ENCODE measurements at regions of chr16 and their contacts with region 1.

Region 1: DNA sequence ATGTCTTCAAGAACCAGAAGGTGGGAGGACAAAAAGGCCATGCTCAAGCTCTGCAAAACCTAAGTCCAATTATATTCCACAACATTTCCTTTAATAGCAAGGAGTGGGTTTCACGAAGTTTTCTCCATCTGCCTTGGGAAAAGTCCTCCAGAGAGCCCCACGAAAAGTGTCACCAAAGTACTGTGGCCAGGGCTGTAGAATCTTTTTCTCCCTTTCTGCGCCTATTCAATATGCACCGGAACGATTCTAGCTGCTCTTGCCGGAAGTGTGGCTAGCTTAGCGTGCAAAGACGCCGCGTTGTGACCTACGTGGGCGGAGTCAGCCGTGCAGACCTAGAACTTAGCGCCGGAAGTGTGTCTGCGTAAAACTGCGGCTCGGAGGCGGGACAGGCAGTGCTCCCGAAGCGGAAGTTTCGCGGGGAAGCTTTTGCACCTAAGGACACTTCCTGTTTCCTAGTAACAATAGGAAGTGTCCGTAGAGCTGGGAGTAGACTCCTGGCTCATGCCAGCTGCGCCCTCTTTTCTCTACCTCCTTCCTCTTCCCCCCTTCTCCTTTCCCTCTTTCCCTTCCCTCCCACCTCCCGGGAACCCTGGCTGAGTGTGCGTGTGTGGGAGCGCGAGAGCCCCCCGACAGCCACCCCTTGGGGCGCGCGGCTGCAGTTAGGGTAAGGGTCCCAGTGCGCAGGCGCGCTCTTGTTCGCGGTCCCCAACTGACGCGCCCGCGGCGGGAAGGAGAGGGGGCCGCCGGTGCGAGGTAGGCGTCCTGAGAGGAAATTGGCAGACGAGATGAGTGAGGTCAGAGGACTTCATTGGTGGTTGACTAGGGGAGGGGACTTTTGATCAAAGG is at the starts of genes ZNF646 and ZNF668:
- DNase-seq: peak; percentile 98
- H3K4me3 Mint-ChIP-seq: peak within 1 kb of the TSS; percentile 99
- H3K27ac Mint-ChIP-seq: peak within 1 kb of the TSS; percentile 96
- H3K4me1 Mint-ChIP-seq: peaks cover 23% of the 10 kb centered on the region
- H3K27me3 Mint-ChIP-seq: no peaks in the 10 kb centered on the region
- total RNA-seq, gene ZNF646: 24.4 and 24.5 TPM in 2 replicates
- total RNA-seq, gene ZNF668: 12.7 and 13.2 TPM in 2 replicates

Region 2: DNA sequence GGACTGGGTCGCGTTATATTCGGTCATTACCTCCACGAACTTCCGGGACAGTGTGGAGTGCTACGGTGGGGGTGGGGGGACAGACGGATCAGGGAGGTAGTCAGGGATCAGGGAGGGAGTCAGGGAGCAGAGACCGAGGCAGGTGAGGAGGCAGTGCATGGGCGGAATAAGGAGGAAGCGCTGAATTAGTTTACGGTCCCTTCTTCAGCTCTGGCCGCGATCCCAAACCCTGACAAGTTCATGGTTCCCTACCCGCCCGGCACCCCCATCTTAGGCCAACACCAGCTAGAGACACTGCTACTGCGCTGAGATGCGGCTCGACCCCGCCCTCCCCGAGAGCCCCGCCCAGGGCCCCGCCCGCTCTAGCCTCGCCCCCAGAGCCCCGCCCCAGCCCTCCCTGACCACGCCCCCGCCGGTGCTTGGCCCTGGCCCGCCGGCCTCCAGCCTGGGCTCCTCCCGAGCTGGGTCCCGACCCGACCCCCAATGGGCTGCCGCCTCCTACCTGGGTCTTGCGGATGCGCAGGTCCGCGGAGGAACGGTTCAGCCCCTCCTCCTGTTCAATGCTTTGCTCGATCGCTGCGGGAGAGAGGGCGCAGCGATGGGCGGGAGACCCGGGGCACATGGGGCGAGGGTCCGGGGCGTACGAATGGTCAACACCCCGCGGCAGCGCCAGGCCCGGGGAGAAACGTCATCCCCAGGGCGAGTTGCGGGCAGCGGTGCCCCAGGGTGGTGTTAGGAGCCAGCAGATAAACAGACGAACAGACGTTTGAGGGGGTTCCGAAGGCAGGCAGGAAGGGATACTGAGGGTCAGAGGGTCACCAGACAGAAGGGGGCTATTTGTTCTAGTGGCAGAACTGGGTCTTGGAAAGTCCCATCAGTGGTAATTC is 76.9 kb before region 1 on chr16:
- intact Hi-C with region 1: loop called (anchors 2 kb)
- DNase-seq: peak; percentile 67
- H3K4me3 Mint-ChIP-seq: peak overlapping the region; percentile 74
- H3K27ac Mint-ChIP-seq: no peak overlapping the region
- H3K4me1 Mint-ChIP-seq: peaks cover 13% of the 10 kb centered on the region
- H3K27me3 Mint-ChIP-seq: peaks cover 2% of the 10 kb centered on the region

Region 3: GRCh38 chr16:31094424-31095120 is 20.4 kb after region 1 on chr16 and contains the start of gene VKORC1:
- intact Hi-C with region 1: loop called (anchors 1 kb)
- DNase-seq: peak; percentile 85
- H3K4me3 Mint-ChIP-seq: peak within 1 kb of the TSS; percentile 99
- H3K27ac Mint-ChIP-seq: peak within 1 kb of the TSS; percentile 83
- H3K4me1 Mint-ChIP-seq: peaks cover 20% of the 10 kb centered on the region
- H3K27me3 Mint-ChIP-seq: no peaks in the 10 kb centered on the region
- total RNA-seq, gene VKORC1: 54.5 and 60.0 TPM in 2 replicates

Region 4: GRCh38 chr16:31142109-31143010 is 68.2 kb after region 1 on chr16:
- intact Hi-C with region 1: loop called (anchors 1 kb)
- DNase-seq: peak; percentile 98
- H3K4me3 Mint-ChIP-seq: peak overlapping the region; percentile 70
- H3K27ac Mint-ChIP-seq: peak overlapping the region; percentile 77
- H3K4me1 Mint-ChIP-seq: peaks cover 7% of the 10 kb centered on the region
- H3K27me3 Mint-ChIP-seq: peaks cover 7% of the 10 kb centered on the region